Activated naive CD4-positive, alpha-beta T cell treated with anti-CD3 and anti-CD28 coated beads for 36 hours (primary cell): ENCODE measurements at regions of chr17 and their contacts with region 1.

Region 1: GRCh38 chr17:35764123-35764991 is 3.7 kb downstream of the C17orf50 start:
- DNase-seq: peak; percentile 84
- H3K4me3 Mint-ChIP-seq: peak overlapping the region; percentile 79
- H3K27ac Mint-ChIP-seq: no peak overlapping the region
- H3K4me1 Mint-ChIP-seq: peaks cover 8% of the 10 kb centered on the region
- H3K27me3 Mint-ChIP-seq: no peaks in the 10 kb centered on the region

Region 2: GRCh38 chr17:35778641-35779196 is 14.4 kb after region 1 on chr17:
- CTCF ChIA-PET with region 1: interaction called, 19 read pairs
- intact Hi-C with region 1: no loop called
- DNase-seq: no peak
- H3K4me3 Mint-ChIP-seq: no peak overlapping the region
- H3K27ac Mint-ChIP-seq: no peak overlapping the region
- H3K4me1 Mint-ChIP-seq: no peaks in the 10 kb centered on the region
- H3K27me3 Mint-ChIP-seq: no peaks in the 10 kb centered on the region

Region 3: DNA sequence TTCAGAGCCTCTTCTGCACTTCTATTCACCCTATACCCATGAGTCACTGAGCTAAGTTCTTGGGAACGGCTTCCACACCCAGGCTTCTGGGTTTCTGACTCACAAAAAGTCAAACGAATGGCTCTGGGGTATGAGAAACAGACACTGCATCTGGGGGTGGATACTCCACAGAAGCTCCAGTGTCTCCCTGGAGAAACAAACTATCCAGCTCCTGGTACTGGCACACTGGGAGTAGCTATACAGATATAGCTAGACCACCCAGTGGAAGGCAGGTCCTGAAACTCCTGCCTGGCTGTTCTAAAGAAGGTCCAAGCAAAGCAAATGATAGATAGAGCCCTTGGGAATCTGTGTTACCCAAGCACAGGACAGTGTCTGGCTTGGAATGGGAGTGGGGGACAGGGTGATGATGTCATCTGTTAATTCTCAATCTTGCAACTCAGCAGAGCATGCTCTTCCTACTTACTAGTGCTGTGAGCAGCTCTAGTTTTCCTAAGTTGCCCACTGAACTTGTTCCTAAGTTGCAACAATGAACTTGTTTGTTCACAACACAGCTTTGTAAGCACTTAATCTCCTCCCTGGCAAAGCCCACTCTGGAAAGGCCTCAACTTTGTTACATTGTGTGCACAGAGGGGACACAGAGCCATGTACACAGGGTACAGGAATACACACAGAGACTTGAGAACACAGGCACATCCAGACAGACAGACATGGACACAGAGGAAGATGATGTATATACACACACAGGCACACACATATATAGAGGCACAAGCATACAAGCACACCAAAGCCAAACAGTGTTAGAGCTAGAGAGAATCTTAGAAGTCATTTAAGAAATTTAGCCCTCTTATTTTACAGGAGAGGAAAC is 24.4 kb after region 1 on chr17:
- CTCF ChIA-PET with region 1: interaction called, 51 read pairs
- intact Hi-C with region 1: no loop called
- DNase-seq: peak; percentile 21
- H3K4me3 Mint-ChIP-seq: no peak overlapping the region
- H3K27ac Mint-ChIP-seq: no peak overlapping the region
- H3K4me1 Mint-ChIP-seq: peaks cover 25% of the 10 kb centered on the region
- H3K27me3 Mint-ChIP-seq: peaks cover 6% of the 10 kb centered on the region

Region 4: GRCh38 chr17:35794988-35795824 is 30.8 kb after region 1 on chr17 and contains the start of gene MMP28:
- CTCF ChIA-PET with region 1: interaction called, 51 read pairs
- intact Hi-C with region 1: no loop called
- DNase-seq: peak; percentile 44
- H3K4me3 Mint-ChIP-seq: peak within 1 kb of the TSS; percentile 73
- H3K27ac Mint-ChIP-seq: no peak within 1 kb of the TSS
- H3K4me1 Mint-ChIP-seq: peaks cover 27% of the 10 kb centered on the region
- H3K27me3 Mint-ChIP-seq: peaks cover 21% of the 10 kb centered on the region
- total RNA-seq, gene MMP28: 0.19 to 0.35 TPM

Region 5: DNA sequence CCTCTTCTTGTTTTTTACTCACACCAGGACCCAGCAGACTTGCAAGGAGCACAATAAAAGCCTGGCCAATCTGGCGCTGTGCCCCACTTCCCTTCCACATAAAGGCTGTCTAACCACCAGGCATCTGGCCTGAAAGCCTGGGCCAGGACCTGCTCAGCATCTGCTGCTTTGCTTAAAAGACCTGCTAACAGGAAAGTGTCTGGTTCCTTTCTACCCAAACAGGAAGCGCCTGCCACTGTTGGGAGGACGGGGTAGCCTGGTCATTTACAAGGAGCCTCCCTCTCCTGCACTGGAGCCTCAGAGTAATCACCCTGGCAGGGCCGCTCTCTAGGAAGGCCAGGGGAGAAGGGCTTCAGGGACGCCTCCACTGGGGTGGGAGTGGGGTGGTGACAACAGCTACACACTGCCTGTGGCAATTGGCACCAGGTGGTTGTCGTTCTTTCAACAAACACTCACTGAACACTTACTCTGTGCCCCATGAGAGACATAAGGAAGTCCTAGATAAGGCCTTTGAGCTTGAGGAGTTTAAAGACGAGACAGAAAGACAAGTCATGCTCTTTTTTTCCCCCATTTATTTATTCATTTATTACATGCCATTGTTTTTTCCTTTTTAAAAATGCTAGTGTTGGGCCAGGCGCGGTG is 37.3 kb after region 1 on chr17:
- CTCF ChIA-PET with region 1: interaction called, 284 read pairs
- intact Hi-C with region 1: loop called (anchors 1 kb)
- DNase-seq: peak; percentile 50
- H3K4me3 Mint-ChIP-seq: no peak overlapping the region
- H3K27ac Mint-ChIP-seq: peak overlapping the region; percentile 9
- H3K4me1 Mint-ChIP-seq: peaks cover 33% of the 10 kb centered on the region
- H3K27me3 Mint-ChIP-seq: no peaks in the 10 kb centered on the region

Region 6: DNA sequence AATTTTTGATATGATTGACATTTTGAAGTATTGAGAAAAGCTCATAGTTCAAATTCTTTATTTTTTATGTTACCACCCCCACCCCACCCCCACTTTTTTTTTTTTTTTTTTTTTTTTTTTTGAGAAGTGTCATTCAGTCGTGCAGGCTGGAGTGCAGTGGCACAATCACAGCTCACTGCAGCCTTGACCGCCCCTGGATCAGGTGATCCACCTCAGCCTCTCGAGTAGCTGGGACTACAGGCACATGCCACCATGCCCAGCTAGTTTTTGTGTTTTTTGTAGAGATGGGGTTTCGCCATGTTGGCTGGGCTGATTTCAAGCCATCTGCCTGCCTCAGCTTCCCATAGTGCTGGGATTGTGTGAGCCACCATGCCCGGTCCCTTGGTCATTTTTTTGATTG is 52.4 kb after region 1 on chr17:
- CTCF ChIA-PET with region 1: interaction called, 284 read pairs
- intact Hi-C with region 1: no loop called
- DNase-seq: no peak
- H3K4me3 Mint-ChIP-seq: no peak overlapping the region
- H3K27ac Mint-ChIP-seq: no peak overlapping the region
- H3K4me1 Mint-ChIP-seq: peaks cover 53% of the 10 kb centered on the region
- H3K27me3 Mint-ChIP-seq: no peaks in the 10 kb centered on the region